ENCODE measurements at regions of chr9 and their contacts with region 1.

Region 1: DNA sequence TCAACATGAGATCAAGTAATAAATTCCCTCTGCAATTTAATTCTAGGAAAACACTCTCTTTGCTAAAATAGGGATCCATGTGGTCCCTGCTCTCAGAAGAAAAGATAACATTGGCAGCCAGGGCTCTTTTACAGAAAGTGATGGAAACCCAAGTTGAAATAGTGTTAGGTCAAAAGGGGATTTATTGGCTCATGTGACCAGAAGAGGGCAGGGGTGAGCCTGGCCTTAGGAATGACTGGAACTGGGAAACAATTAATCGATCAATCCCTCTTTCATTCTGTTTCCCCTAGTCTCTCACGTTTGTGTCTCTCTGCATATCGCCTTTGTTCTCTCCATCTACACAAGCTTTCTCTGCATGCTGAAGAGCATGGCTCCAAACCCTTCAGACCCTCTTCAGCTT is 58.3 kb upstream of the ALDH1B1 start:
- DNase-seq: no peak
- ATAC-seq: no peak
- H3K4me3 ChIP-seq: no peak overlapping the region
- H3K27ac ChIP-seq: no peak overlapping the region
- H3K4me1 ChIP-seq: no peaks in the 10 kb centered on the region
- H3K27me3 ChIP-seq: no peaks in the 10 kb centered on the region
- CTCF ChIP-seq: no peak
- POLR2A ChIP-seq: no peak

Region 2: GRCh38 chr9:38107811-38108304 is 226.4 kb before region 1 on chr9:
- in situ Hi-C with region 1: no loop called
- intact Hi-C with region 1: no loop called
- DNase-seq: no peak
- ATAC-seq: no peak
- H3K4me3 ChIP-seq: no peak overlapping the region
- H3K27ac ChIP-seq: no peak overlapping the region
- H3K4me1 ChIP-seq: no peaks in the 10 kb centered on the region
- H3K27me3 ChIP-seq: no peaks in the 10 kb centered on the region
- CTCF ChIP-seq: no peak
- POLR2A ChIP-seq: no peak

Region 3: DNA sequence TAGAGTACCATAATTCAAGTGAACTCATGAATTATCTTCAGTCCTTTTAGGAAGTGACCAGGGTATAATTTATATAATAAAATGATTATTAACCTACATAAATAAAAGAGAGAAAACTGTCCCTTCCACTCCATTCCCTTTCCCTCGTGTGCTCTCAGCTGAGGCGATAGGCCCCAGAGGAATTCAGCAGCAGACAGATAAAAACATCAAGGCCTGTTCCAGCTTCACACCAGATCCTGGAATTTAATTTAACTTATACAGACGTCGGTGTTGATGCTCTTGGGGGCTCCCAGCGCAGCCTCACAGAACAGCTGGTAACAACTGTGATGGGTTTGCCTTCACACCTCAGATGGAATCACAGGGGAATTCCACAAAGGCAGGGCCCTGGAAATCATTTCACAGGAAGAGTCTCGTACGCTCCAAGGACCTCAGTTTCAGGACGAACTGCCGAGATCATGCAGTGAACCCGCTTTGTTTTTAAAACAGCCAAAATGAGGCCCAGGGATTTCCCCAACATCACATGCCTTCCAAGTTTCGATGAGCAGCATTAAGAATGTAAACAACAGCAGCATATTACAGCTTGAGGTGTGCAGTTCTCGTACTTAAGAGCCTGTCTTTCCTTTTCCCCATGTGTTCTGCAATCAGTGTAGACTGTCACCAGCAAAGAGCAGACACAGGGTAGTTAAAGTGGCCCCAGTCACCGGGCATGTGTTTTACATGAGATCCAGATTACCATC is 15.3 kb before region 1 on chr9:
- in situ Hi-C with region 1: no loop called
- intact Hi-C with region 1: no loop called
- DNase-seq: no peak
- ATAC-seq: no peak
- H3K4me3 ChIP-seq: peak overlapping the region in 1 of 4 donors; percentile 1
- H3K27ac ChIP-seq: no peak overlapping the region
- H3K4me1 ChIP-seq: no peaks in the 10 kb centered on the region
- H3K27me3 ChIP-seq: peaks cover 0 to 5% (median 0%) of the 10 kb centered on the region in 3 donors
- CTCF ChIP-seq: no peak
- POLR2A ChIP-seq: no peak

Region 4: DNA sequence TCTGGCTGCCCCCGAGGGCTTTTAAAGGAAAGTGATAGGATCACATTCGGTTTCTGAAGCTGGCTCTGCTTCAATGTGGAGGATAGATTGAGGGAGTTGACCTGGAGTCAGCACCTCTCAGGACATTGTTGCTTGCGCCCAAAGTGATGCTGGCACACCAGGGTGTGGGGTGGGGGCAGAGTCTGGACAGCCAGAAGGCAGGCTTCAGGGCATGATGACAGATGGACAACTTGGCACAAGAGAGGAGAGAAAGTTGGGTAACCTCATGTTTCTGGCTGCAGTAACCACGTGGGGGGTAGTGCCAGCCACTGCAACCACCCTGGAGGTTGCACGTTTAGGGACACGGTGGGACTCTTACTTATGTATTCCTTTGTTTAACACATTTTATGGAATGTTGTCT is 67.8 kb after region 1 on chr9:
- in situ Hi-C with region 1: no loop called
- intact Hi-C with region 1: loop called (anchors 2 kb)
- DNase-seq: no peak
- ATAC-seq: no peak
- H3K4me3 ChIP-seq: no peak overlapping the region
- H3K27ac ChIP-seq: no peak overlapping the region
- H3K4me1 ChIP-seq: peaks cover 0 to 3% of the 10 kb centered on the region in 2 donors
- H3K27me3 ChIP-seq: peaks cover 4 to 12% (median 5%) of the 10 kb centered on the region in 3 donors
- CTCF ChIP-seq: no peak
- POLR2A ChIP-seq: no peak

Region 5: DNA sequence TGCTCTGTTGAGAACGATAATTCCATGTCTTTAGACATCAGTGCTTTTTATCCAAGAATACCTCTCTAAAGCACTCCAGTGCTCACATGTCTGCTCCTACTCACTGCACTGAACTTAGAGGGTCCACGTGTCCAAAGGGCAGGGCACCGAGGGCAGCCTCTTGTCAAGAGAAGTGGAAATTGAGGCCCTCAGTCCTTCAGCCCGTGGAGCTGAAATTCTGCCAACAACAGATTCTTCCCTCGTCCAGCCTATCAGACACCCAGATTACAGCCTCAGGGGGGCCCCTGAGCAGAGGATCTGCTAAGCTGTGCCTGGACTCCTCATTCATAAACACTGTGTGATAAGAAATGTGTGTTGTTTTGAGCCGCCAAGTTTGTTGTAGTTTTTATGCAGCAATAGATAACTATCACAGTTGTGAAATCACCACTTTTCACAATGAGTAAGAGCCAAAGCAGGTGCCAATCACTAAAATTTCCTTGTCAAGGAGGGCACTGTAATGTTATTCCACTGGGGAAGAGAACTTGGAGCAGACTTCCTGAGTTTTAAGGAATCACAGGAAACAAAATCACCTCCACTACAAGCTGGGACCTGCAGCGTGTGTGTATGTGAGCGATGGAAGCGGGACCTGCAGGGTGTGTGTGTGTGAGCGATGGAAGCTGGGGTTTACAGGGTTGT is 148.8 kb after region 1 on chr9:
- in situ Hi-C with region 1: no loop called
- intact Hi-C with region 1: no loop called
- DNase-seq: no peak
- ATAC-seq: no peak
- H3K4me3 ChIP-seq: no peak overlapping the region
- H3K27ac ChIP-seq: no peak overlapping the region
- H3K4me1 ChIP-seq: no peaks in the 10 kb centered on the region
- H3K27me3 ChIP-seq: no peaks in the 10 kb centered on the region
- CTCF ChIP-seq: no peak
- POLR2A ChIP-seq: no peak